MCF 10A (cell line): ENCODE measurements at regions of chr3 and their contacts with region 1.

Region 1: DNA sequence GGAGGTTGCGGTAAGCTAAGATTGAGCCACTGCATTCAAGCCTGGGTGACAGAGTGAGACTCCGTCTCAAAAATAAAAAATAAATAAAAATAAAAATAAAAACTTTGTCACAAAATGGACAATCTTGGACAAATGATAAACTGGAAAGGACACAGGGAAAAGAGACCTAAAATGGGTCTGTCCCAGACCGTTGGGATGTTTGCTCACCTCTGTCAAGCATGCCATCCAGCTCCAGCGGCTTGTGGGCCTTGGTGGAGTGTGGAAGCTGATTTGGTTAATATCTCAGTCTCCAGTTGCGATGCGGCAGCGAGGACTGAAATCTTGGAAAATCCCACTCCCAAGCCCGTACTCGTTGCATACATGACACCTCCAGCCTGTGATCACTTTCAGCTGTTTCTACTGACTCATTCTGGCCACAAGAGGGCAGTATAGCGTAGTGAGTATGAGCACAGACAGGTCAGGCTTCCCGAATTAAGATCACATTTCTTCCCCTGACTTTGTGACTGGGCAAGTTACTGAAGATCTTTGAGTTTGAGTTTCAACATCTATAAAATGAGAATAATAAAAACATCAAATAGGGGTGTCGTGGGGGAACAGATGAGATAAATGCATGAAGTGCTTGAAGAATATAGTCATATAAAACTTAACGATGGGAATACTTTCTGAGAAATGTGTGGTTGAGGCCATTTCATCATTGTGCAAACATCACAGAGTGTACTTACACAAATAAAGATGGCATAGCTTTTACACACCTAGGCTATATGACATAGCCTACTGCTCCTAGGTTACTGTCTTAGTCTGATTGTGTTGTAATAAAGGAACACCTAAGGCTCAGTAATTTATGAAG is 19.6 kb upstream of the MOBP start:
- DNase-seq: peak; percentile 90
- H3K4me3 Mint-ChIP-seq: no peak overlapping the region
- H3K27ac Mint-ChIP-seq: no peak overlapping the region
- H3K4me1 Mint-ChIP-seq: peaks cover 7% of the 10 kb centered on the region
- H3K27me3 Mint-ChIP-seq: peaks cover under 1% of the 10 kb centered on the region
- CTCF ChIP-seq: peak; percentile 67

Region 2: DNA sequence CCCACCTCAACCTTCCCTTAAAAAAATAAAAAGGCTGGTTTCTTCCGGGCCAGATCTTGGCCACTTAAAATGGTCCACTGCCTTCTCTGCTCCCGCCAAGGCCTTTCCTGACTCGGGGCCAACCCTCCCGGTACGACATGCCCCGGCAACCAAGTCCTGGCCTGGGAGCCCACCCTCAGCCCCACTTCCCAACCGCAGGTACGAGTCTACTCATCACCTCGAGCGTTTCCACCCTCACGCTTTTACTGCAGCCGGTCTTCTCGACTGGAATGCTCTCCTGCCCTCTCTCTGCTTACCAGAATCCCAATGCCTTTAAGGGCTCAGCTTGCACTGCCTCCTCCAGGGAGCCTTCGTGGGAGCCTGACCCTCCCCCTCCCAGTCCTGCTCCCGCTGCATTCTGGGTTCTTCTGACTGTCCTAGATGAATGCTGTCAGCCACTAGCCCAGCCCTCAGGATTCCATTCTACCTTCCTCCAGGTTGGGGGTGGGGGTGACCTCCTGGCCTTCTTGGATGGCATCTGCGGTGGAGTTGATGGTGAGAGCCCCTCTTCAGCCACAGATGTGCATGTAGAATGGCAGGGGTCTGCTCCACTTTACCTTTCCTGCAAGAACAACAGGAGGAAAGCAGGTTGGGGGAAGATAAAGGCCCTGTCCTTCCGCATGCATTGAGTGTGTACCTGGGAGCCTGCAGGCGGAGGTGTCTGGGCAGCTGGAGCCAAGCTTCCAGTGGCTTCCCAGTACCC is 293.4 kb before region 1 on chr3:
- CTCF ChIA-PET with region 1: no interaction called
- POLR2A ChIA-PET with region 1: no interaction called
- intact Hi-C with region 1: no loop called
- DNase-seq: peak; percentile 31
- H3K4me3 Mint-ChIP-seq: peak overlapping the region; percentile 97
- H3K27ac Mint-ChIP-seq: peak overlapping the region; percentile 25
- H3K4me1 Mint-ChIP-seq: peaks cover 38% of the 10 kb centered on the region
- H3K27me3 Mint-ChIP-seq: no peaks in the 10 kb centered on the region
- CTCF ChIP-seq: no peak

Region 3: DNA sequence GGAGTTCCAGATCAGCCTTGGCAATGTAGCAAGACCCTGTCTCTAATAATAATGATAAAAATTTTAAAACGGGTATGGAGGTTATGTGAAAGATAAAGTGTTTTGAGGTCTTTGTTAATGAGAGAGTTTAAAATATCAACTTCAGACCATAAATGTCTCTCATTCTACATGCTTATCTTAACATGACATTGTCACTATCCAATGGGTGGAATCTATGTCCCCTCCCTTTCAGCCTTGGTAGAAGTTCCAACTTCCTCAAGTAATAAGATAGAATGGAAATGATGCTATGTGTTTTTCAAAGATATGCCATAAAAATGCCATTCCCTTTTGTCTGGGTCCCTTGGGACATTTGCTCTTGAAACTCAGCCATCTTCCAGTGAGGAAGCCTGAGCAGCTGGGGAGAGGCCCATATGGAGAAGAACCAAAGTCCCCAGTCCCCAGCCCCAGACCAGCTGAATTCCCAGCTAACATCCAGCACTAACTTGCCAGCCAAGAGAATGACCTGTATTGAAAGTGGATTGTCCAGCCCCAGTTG is 24.4 kb before region 1 on chr3:
- CTCF ChIA-PET with region 1: interaction called, 18 read pairs
- POLR2A ChIA-PET with region 1: interaction called, 3 read pairs
- intact Hi-C with region 1: no loop called
- DNase-seq: no peak
- H3K4me3 Mint-ChIP-seq: no peak overlapping the region
- H3K27ac Mint-ChIP-seq: no peak overlapping the region
- H3K4me1 Mint-ChIP-seq: no peaks in the 10 kb centered on the region
- H3K27me3 Mint-ChIP-seq: no peaks in the 10 kb centered on the region
- CTCF ChIP-seq: no peak

Region 4: GRCh38 chr3:39473452-39474127 is 25.7 kb after region 1 on chr3:
- CTCF ChIA-PET with region 1: interaction called, 15 read pairs
- POLR2A ChIA-PET with region 1: no interaction called
- intact Hi-C with region 1: no loop called
- DNase-seq: no peak
- H3K4me3 Mint-ChIP-seq: no peak overlapping the region
- H3K27ac Mint-ChIP-seq: no peak overlapping the region
- H3K4me1 Mint-ChIP-seq: no peaks in the 10 kb centered on the region
- H3K27me3 Mint-ChIP-seq: no peaks in the 10 kb centered on the region
- CTCF ChIP-seq: no peak

Region 5: DNA sequence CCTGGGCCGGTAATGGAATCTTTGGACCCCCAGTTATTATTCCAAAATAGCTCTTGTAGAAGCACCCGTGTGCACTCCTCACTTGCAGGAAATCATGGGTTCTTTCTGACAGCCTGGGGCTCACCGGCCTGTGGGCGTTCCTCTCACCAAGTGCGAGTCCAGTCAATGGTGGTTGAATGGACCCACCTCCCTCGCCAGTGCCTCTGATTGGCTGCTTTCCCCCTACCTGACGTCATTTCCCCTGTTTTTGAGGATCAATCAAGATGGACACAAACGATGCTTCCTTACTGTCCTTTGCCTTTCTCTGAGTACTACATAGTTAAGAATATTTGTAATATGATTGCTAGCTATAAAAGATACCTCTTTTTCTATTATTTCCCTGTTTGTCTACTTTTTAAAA is 37.7 kb after region 1 on chr3:
- CTCF ChIA-PET with region 1: interaction called, 11 read pairs
- POLR2A ChIA-PET with region 1: no interaction called
- intact Hi-C with region 1: no loop called
- DNase-seq: no peak
- H3K4me3 Mint-ChIP-seq: no peak overlapping the region
- H3K27ac Mint-ChIP-seq: no peak overlapping the region
- H3K4me1 Mint-ChIP-seq: no peaks in the 10 kb centered on the region
- H3K27me3 Mint-ChIP-seq: no peaks in the 10 kb centered on the region
- CTCF ChIP-seq: no peak

Region 6: DNA sequence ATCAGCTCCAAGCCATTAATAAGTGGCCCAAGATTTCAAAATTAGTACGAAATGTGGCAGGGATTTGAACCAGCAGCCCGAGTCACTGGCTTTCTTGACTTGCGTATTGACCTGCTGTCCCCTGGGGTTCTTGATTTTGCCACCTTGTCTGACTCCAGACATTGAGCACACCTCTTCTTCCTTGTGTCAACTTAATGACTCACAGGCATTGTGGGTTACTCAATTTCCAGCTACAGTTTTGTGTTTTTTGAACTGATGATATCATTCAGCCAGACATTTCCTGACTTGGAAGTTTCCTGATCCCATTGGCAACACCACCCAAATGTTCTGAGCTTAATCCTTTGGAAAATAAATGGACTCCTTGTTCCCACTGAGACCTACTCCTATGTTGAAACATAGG is 83.8 kb after region 1 on chr3:
- CTCF ChIA-PET with region 1: interaction called, 11 read pairs
- POLR2A ChIA-PET with region 1: no interaction called
- intact Hi-C with region 1: no loop called
- DNase-seq: peak; percentile 96
- H3K4me3 Mint-ChIP-seq: no peak overlapping the region
- H3K27ac Mint-ChIP-seq: peak overlapping the region; percentile 34
- H3K4me1 Mint-ChIP-seq: peaks cover 22% of the 10 kb centered on the region
- H3K27me3 Mint-ChIP-seq: no peaks in the 10 kb centered on the region
- CTCF ChIP-seq: no peak

Region 7: DNA sequence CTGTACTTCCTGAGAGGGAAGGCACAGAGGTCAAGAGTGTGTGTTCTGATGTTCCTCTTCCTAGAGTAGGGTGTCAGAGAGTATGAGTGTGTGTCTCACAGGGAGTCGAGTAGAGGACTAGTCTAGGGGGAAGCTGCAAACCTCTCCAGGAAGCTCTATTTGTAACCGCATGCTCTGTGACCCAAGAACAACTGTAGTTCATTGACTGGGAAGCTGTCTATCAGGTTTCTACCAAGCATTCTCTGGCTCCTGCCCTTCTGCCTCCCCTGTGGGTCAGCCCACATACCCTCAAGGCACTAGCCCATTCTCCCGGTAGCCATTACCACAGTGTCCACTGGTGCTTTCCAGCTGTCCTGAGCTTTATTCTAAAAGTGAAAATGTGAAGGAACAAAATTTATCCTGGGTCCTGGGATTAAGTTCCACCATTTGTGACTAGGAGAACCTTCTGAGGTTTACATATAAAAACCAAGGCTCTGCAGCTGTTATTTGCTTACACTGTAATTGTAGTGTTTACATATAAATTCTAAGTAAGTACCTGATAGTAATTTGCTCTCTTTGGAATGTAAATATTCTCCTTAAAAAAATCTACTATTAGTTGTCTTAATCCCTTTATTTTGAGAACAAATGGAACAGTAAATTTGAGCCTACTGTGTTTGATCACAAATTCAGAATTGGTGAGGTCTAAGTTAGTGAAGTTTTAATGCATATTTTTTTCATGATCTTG is 402.3 kb after region 1 on chr3:
- CTCF ChIA-PET with region 1: no interaction called
- POLR2A ChIA-PET with region 1: no interaction called
- intact Hi-C with region 1: no loop called
- DNase-seq: no peak
- H3K4me3 Mint-ChIP-seq: no peak overlapping the region
- H3K27ac Mint-ChIP-seq: no peak overlapping the region
- H3K4me1 Mint-ChIP-seq: no peaks in the 10 kb centered on the region
- H3K27me3 Mint-ChIP-seq: no peaks in the 10 kb centered on the region
- CTCF ChIP-seq: no peak